KBM-7 (cell line): ENCODE measurements at regions of chr5 and their contacts with region 1.

Region 1: DNA sequence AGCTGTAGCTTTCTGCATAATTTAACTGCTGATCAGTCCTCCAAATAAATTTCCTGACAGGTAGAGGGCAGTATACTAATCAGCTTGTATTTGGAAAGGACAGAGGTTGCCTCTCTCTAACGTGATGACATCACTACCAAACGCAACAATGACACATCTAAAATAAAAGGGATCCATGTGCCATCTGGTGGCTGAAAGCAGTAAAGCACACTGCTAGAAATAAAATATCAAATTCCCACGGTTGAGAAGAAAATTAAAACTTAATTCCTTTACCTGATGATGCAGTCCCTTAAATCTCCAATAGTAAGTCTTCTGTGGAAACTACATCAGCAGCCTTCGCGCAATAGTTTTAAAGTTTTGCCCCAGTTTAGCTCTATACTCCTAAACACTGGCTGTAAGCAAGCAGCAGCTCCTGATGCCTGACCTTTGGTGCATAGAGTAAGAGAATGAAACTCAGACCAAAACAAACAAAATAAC is 54.5 kb downstream of the DIAPH1 start:
- DNase-seq: peak; percentile 96

Region 2: DNA sequence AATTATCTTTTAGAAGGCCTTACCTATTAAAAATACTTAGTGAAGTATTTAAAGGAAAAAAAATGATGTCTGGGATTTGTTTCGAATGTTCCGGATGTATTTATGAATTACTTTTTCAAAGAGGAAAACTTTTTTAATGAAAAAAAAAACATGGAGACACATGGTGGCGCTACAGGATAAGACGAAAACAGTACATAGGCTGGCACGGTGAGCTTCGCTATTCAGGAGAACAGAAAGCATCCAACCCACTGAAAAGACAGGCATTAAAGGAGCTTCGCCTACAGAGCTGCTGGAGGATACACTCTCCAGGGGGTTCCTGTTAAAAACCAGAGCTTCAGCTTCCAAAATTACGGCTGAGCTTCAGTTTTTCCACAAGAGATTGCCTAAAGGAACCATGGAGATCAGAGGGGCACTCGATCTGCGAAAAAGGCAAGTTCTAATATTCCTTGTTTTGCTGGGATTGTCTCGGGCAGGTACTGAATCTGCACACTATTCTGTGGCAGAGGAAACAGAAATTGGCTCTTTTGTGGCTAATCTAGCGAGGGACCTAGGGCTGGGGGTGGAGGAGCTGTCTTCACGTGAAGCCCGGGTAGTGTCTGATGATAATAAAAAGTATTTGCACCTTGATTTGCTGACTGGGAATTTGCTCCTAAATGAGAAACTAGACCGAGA is 341.0 kb before region 1 on chr5 and contains the start of gene PCDHB14:
- in situ Hi-C with region 1: loop called (anchors 25 kb)
- DNase-seq: peak; percentile 47

Region 3: GRCh38 chr5:141349917-141350619 is 214.2 kb before region 1 on chr5 and contains the start of gene PCDHGB1:
- in situ Hi-C with region 1: loop called (anchors 25 kb)
- DNase-seq: peak; percentile 40

Region 4: GRCh38 chr5:141387233-141387949 is 176.9 kb before region 1 on chr5 and contains the start of gene PCDHGB4:
- in situ Hi-C with region 1: no loop called
- DNase-seq: no peak

Region 5: GRCh38 chr5:141866149-141867120 is 302.2 kb after region 1 on chr5:
- in situ Hi-C with region 1: no loop called
- DNase-seq: no peak